ENCODE measurements at regions of chr5 and their contacts with region 1.

Region 1: GRCh38 chr5:61331407-61332357 is at the start of gene ZSWIM6:
- DNase-seq: peak; percentile 99
- H3K4me3 Mint-ChIP-seq: peak within 1 kb of the TSS; percentile 87
- H3K27ac Mint-ChIP-seq: peak within 1 kb of the TSS; percentile 82
- H3K4me1 Mint-ChIP-seq: peaks cover 41% of the 10 kb centered on the region
- H3K27me3 Mint-ChIP-seq: peaks cover 20% of the 10 kb centered on the region
- total RNA-seq, gene ZSWIM6: 4.3 TPM

Region 2: GRCh38 chr5:60944904-60945812 is 386.5 kb before region 1 on chr5 and contains the starts of genes ERCC8 and NDUFAF2:
- CTCF ChIA-PET with region 1: no interaction called
- intact Hi-C with region 1: loop called (anchors 1 kb)
- DNase-seq: peak; percentile 92
- H3K4me3 Mint-ChIP-seq: no peak within 1 kb of the TSS
- H3K27ac Mint-ChIP-seq: peak within 1 kb of the TSS; percentile 62
- H3K4me1 Mint-ChIP-seq: peaks cover 24% of the 10 kb centered on the region
- H3K27me3 Mint-ChIP-seq: no peaks in the 10 kb centered on the region
- total RNA-seq, gene ERCC8: 7.8 to 9.1 TPM
- total RNA-seq, gene NDUFAF2: 35.6 to 38.5 TPM

Region 3: GRCh38 chr5:61162010-61162831 is 169.5 kb before region 1 on chr5 and contains the start of gene SMIM15:
- CTCF ChIA-PET with region 1: no interaction called
- intact Hi-C with region 1: loop called (anchors 1 kb)
- DNase-seq: peak; percentile 90
- H3K4me3 Mint-ChIP-seq: peak within 1 kb of the TSS; percentile 97
- H3K27ac Mint-ChIP-seq: peak within 1 kb of the TSS; percentile 95
- H3K4me1 Mint-ChIP-seq: peaks cover 38% of the 10 kb centered on the region
- H3K27me3 Mint-ChIP-seq: no peaks in the 10 kb centered on the region
- total RNA-seq, gene SMIM15: 45.8 to 48.1 TPM

Region 4: GRCh38 chr5:61319388-61320146 is 12.1 kb before region 1 on chr5:
- CTCF ChIA-PET with region 1: no interaction called
- intact Hi-C with region 1: no loop called
- DNase-seq: no peak
- H3K4me3 Mint-ChIP-seq: no peak overlapping the region
- H3K27ac Mint-ChIP-seq: no peak overlapping the region
- H3K4me1 Mint-ChIP-seq: peaks cover 9% of the 10 kb centered on the region
- H3K27me3 Mint-ChIP-seq: peaks cover 3% of the 10 kb centered on the region

Region 5: GRCh38 chr5:61408476-61409168 is 76.9 kb after region 1 on chr5:
- CTCF ChIA-PET with region 1: no interaction called
- intact Hi-C with region 1: loop called (anchors 1 kb)
- DNase-seq: peak; percentile 98
- H3K4me3 Mint-ChIP-seq: peak overlapping the region; percentile 62
- H3K27ac Mint-ChIP-seq: no peak overlapping the region
- H3K4me1 Mint-ChIP-seq: peaks cover 34% of the 10 kb centered on the region
- H3K27me3 Mint-ChIP-seq: no peaks in the 10 kb centered on the region

Region 6: GRCh38 chr5:61658592-61659008 is 326.9 kb after region 1 on chr5:
- CTCF ChIA-PET with region 1: no interaction called
- intact Hi-C with region 1: loop called (anchors 5 kb)
- DNase-seq: peak; percentile 90
- H3K4me3 Mint-ChIP-seq: no peak overlapping the region
- H3K27ac Mint-ChIP-seq: no peak overlapping the region
- H3K4me1 Mint-ChIP-seq: no peaks in the 10 kb centered on the region
- H3K27me3 Mint-ChIP-seq: peaks cover 11% of the 10 kb centered on the region

Region 7: GRCh38 chr5:62369039-62369438 is 1037.4 kb after region 1 on chr5:
- CTCF ChIA-PET with region 1: no interaction called
- intact Hi-C with region 1: no loop called
- DNase-seq: no peak
- H3K4me3 Mint-ChIP-seq: no peak overlapping the region
- H3K27ac Mint-ChIP-seq: peak overlapping the region; percentile 35
- H3K4me1 Mint-ChIP-seq: peaks cover 3% of the 10 kb centered on the region
- H3K27me3 Mint-ChIP-seq: no peaks in the 10 kb centered on the region

Region 8: GRCh38 chr5:62412537-62413329 is 1081.1 kb after region 1 on chr5 and contains the start of gene IPO11:
- CTCF ChIA-PET with region 1: no interaction called
- intact Hi-C with region 1: loop called (anchors 1 kb)
- DNase-seq: peak; percentile 99
- H3K4me3 Mint-ChIP-seq: peak within 1 kb of the TSS; percentile 88
- H3K27ac Mint-ChIP-seq: peak within 1 kb of the TSS; percentile 86
- H3K4me1 Mint-ChIP-seq: peaks cover 26% of the 10 kb centered on the region
- H3K27me3 Mint-ChIP-seq: no peaks in the 10 kb centered on the region
- total RNA-seq, gene IPO11: 54.8 to 57.2 TPM

Measured in activated naive CD4-positive, alpha-beta T cell treated with anti-CD3 and anti-CD28 coated beads for 36 hours (primary cell).